ENCODE measurements at regions of chr6 and their contacts with region 1.

Region 1: GRCh38 chr6:26234421-26235296 is 130.3 kb upstream of the BTN3A2 start:
- DNase-seq: peak; percentile 73
- CTCF ChIP-seq: no peak

Region 2: DNA sequence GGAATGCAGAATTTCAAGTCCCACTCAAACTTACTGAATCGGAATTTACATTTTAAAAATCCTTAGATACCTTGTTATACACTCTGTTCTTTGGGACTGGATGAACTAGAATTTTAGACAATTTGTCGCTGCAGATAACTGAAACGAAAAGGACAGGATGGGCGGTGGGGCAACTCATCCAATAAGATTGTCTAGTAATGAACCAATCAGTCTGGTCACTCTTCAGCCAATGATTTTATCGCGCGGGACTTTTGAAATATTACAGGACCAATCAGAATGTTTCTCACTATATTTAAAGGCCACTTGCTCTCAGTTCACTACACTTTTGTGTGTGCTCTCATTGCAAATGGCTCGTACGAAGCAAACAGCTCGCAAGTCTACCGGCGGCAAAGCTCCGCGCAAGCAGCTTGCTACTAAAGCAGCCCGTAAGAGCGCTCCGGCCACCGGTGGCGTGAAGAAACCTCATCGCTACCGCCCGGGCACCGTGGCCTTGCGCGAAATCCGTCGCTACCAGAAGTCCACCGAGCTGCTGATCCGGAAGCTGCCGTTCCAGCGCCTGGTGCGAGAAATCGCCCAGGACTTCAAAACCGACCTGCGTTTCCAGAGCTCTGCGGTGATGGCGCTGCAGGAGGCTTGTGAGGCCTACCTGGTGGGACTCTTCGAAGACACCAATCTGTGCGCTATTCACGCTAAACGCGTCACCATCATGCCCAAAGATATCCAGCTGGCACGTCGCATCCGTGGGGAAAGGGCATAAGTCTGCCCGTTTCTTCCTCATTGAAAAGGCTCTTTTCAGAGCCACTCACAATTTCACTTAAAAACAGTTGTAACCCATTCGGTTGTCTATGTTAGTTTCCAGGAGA is 189.4 kb before region 1 on chr6:
- CTCF ChIA-PET with region 1: interaction called, 3 read pairs
- POLR2A ChIA-PET with region 1: interaction called, 14 read pairs
- DNase-seq: peak; percentile 88
- CTCF ChIP-seq: peak; percentile 12

Region 3: DNA sequence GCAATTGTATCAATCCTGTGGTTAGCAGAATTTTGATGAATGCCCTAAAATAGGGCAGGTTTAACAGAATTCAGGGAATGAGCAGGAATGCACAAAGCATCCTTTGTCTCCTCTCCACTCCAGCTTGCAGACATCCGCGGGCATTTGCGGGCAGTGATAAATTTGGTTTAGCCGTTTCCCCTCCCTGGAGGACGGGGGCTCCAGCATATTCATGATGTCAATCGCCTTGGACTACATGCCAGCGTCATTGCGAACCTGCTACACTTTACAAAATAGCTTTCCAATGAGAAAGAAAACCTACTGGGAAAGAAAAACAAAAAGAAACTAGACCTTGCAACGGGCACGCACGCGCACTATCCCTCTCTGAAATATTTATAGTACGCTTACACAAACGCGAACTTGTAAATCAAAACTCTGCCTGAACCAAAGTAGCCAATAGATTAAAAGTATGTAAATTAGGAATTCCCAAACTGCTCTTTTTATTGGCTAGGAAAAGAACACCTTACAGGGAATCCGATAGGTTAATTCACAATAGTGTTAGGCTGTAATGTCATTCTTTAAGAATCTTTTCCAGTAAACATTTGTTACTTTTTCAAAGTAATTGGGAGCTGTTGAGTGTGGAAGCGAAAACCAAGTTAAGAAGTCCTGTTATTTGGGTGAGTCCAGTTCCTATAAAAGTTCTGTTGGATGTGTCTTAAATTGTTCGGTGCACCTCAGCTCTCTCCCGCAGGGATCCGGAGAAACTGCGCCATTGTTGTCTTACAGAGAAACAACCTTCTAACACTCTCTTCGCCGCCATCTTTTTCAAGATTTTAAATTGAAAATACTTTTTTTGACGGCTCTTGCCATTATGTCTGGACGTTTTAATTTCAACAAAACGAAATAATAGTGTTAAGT is 10.8 kb before region 1 on chr6:
- CTCF ChIA-PET with region 1: interaction called, 11 read pairs
- POLR2A ChIA-PET with region 1: interaction called, 16 read pairs
- DNase-seq: peak; percentile 58
- CTCF ChIP-seq: no peak

Region 4: DNA sequence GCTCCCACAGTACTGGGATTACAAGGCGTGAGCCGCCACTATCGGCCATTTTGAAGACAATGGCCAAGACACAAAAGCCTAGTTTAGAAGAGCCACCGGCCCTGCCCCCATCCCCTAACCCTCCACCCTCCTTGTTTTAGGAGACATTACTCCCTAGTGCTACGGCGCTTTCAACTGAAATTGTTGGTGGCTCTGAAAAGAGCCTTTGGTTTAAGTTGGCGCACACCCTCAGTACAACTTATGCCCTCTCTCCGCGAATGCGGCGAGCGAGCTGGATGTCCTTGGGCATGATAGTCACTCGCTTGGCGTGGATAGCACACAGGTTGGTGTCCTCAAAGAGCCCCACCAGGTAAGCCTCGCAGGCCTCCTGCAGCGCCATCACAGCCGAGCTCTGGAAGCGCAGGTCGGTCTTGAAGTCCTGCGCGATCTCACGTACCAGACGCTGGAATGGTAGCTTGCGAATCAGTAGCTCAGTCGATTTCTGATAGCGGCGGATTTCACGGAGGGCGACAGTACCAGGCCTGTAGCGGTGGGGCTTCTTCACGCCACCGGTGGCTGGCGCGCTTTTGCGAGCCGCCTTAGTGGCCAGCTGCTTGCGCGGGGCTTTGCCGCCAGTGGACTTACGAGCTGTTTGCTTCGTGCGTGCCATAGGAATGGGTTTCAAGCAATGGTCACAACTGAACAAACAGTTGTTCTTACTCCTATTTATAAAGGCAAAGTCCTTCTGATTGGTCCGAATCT is 15.5 kb after region 1 on chr6:
- CTCF ChIA-PET with region 1: interaction called, 39 read pairs
- POLR2A ChIA-PET with region 1: interaction called, 45 read pairs
- DNase-seq: no peak
- CTCF ChIP-seq: peak; percentile 59

Region 5: DNA sequence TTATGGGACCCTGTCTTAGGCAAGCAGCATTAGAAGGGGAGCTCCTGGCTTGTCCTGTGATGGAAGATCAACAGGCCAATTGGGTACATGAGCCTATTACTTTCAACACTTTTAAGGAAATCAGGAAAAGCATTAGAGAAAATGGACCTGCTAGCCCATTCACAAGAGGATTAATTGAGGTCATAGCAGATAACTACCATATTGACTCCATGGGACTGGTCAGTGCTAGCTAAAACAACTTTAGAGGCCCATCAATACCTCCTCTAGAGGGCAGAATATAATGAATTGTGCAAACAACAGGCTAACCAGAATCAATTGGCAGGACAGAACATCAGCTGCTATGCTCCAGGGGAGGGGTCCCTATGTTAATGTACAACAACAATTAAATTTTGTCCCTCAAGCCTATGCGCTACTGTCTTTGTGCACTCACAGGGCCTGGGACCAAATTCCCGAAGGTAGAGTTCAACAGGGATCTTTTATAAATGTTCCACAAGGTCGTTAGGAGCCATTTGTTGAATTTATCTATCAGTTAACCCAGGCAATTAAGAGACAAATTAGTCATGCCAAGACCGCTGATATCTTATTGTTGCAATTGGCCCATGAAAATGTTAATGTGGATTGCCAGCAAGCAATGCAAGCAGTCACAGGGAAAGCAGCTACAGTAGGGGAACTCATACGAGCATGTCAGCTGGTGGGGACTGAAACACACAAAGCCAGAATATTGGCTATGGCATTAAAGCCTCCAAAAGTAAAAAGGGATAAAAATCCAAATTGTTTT is 23.7 kb after region 1 on chr6:
- CTCF ChIA-PET with region 1: interaction called, 11 read pairs
- POLR2A ChIA-PET with region 1: no interaction called
- DNase-seq: no peak
- CTCF ChIP-seq: peak; percentile 35

Measured in GM10248 (cell line).